Ovary (tissue), 10 donors: ENCODE measurements at regions of chr12 and their contacts with region 1.

Region 1: GRCh38 chr12:46803517-46803916 is 22.3 kb downstream of the SLC38A4 start:
- DNase-seq: no peak
- H3K4me3 ChIP-seq: no peak overlapping the region
- H3K27ac ChIP-seq: no peak overlapping the region
- H3K4me1 ChIP-seq: no peaks in the 10 kb centered on the region
- H3K27me3 ChIP-seq: no peaks in the 10 kb centered on the region
- CTCF ChIP-seq: no peak
- EP300 ChIP-seq: no peak
- POLR2A ChIP-seq: no peak

Region 2: GRCh38 chr12:46763230-46763629 is 40.3 kb before region 1 on chr12:
- intact Hi-C with region 1: loop called in 1 of 4 experiments (anchors 2 kb)
- DNase-seq: no peak
- H3K4me3 ChIP-seq: no peak overlapping the region
- H3K27ac ChIP-seq: no peak overlapping the region
- H3K4me1 ChIP-seq: no peaks in the 10 kb centered on the region
- H3K27me3 ChIP-seq: no peaks in the 10 kb centered on the region
- CTCF ChIP-seq: no peak
- EP300 ChIP-seq: no peak
- POLR2A ChIP-seq: no peak

Region 3: GRCh38 chr12:47207340-47207717 is 403.8 kb after region 1 on chr12:
- intact Hi-C with region 1: no loop called
- DNase-seq: no peak
- H3K4me3 ChIP-seq: no peak overlapping the region
- H3K27ac ChIP-seq: no peak overlapping the region
- H3K4me1 ChIP-seq: no peaks in the 10 kb centered on the region
- H3K27me3 ChIP-seq: no peaks in the 10 kb centered on the region
- CTCF ChIP-seq: no peak
- EP300 ChIP-seq: no peak
- POLR2A ChIP-seq: no peak

Region 4: GRCh38 chr12:47223848-47224213 is 420.3 kb after region 1 on chr12:
- intact Hi-C with region 1: no loop called
- DNase-seq: peak; percentile 56 to 73 (median 64)
- H3K4me3 ChIP-seq: no peak overlapping the region
- H3K27ac ChIP-seq: peak overlapping the region; percentile 69 to 89
- H3K4me1 ChIP-seq: peaks cover 11% of the 10 kb centered on the region
- H3K27me3 ChIP-seq: no peaks in the 10 kb centered on the region
- CTCF ChIP-seq: no peak
- EP300 ChIP-seq: no peak
- POLR2A ChIP-seq: no peak